ENCODE measurements at regions of chr19 and their contacts with region 1.

Region 1: DNA sequence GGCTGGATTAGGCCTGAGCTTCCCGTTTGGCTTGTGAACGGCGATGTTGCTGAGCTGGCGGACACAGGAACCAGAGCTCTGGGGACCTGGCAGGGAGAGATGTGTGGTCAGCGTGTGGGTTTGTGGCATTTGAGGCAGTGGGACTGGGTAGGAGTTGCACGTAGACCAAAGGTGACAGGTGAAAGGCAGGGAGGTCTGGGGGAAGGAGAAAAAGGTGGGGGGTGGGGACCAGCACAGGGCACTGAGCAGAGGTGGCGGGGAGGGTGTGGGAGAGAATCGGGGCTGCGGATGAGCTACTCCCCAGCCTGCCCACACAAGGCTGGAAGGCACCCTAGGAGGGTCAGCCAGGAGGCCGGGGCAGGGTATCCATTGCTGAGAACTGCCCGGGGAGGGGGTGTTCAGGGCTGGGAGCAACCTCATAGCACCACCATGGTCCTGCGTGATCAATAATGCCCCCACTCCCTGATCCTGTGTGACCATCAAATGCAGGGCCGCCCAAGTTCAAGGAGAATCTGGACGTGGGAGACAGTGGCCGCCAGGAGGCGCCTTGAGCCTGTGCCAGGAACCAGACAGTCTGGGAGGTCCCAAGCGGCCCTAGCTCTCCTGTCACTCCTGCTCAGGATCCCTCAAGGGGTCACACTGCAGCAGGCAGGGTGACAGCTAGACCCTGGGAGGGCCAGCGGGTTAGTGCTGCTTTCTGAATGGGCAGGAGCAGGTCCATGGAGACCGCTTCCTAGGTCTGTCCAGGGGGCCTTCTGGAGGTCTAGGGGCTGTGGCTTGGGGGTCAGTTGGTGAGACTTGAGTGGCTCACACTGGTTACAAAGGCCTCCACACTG is 12.8 kb upstream of the SELENOW start:
- DNase-seq: no peak
- ATAC-seq: peak; percentile 86
- H3K4me3 ChIP-seq: no peak overlapping the region
- H3K27ac ChIP-seq: no peak overlapping the region
- H3K4me1 ChIP-seq: 0 out of 2 replicates have a peak, but pooled peaks cover 3% of the 10 kb centered on the region
- H3K27me3 ChIP-seq: no peaks in the 10 kb centered on the region
- CTCF ChIP-seq: peak; percentile 64 to 82 (median 74)
- EP300 ChIP-seq: no peak
- POLR2A ChIP-seq: no peak
- RAD21 ChIP-seq: peak; percentile 72

Region 2: GRCh38 chr19:47745010-47745901 is 20.5 kb before region 1 on chr19 and contains the start of gene NOP53:
- CTCF ChIA-PET with region 1: interaction called, 10 read pairs
- POLR2A ChIA-PET with region 1: interaction called, 5 read pairs
- RAD21 ChIA-PET with region 1: no interaction called
- SMC1A ChIA-PET with region 1: interaction called, 3 read pairs
- in situ Hi-C with region 1: no loop called
- intact Hi-C with region 1: no loop called
- DNase-seq: peak; percentile 93
- ATAC-seq: peak; percentile 79
- H3K4me3 ChIP-seq: peak within 1 kb of the TSS; percentile 92
- H3K27ac ChIP-seq: peak within 1 kb of the TSS; percentile 95
- H3K4me1 ChIP-seq: peaks cover 16% of the 10 kb centered on the region
- H3K27me3 ChIP-seq: no peaks in the 10 kb centered on the region
- CTCF ChIP-seq: no peak
- EP300 ChIP-seq: no peak
- POLR2A ChIP-seq: peak; percentile 98
- RAD21 ChIP-seq: no peak
- polyA plus RNA-seq, gene NOP53: 6.0 to 32.3 TPM

Region 3: GRCh38 chr19:47790398-47790814 is 24.7 kb after region 1 on chr19:
- CTCF ChIA-PET with region 1: interaction called, 75 read pairs
- POLR2A ChIA-PET with region 1: no interaction called
- RAD21 ChIA-PET with region 1: interaction called, 6 read pairs
- SMC1A ChIA-PET with region 1: interaction called, 5 read pairs
- in situ Hi-C with region 1: no loop called
- intact Hi-C with region 1: loop called (anchors 2 kb)
- DNase-seq: no peak
- ATAC-seq: peak; percentile 88
- H3K4me3 ChIP-seq: no peak overlapping the region
- H3K27ac ChIP-seq: no peak overlapping the region
- H3K4me1 ChIP-seq: no peaks in the 10 kb centered on the region
- H3K27me3 ChIP-seq: no peaks in the 10 kb centered on the region
- CTCF ChIP-seq: peak; percentile 56 to 93 (median 87)
- EP300 ChIP-seq: no peak
- POLR2A ChIP-seq: no peak
- RAD21 ChIP-seq: no peak

Measured in GM12878 (cell line).